SK-MEL-5 (cell line): ENCODE measurements at regions of chr20 and their contacts with region 1.

Region 1: DNA sequence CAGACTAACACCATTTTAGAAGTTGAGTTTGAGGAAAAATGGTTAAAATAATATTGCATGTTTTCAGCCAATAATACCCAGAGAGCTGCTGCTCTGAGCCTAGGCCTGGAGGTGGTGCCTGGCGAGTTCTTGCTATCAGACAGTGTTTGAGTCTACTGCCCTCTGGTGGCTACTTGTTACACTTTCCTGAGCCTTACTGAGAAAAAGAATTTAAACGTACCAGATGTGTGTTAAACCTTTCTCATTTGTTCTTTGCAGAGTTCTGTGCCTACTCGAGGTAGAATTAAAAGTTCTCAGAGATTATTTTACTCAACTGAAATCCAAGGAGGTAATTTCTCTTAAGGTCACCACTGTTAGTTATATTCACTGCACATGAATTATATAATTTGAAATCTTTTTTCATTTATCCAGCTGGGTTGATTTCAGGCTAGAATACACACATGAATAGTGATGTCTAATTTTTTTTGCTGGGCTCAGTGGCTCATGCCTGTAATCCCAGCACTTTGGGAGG is 38.2 kb downstream of the SHLD1 start:
- DNase-seq: peak; percentile 93

Region 2: DNA sequence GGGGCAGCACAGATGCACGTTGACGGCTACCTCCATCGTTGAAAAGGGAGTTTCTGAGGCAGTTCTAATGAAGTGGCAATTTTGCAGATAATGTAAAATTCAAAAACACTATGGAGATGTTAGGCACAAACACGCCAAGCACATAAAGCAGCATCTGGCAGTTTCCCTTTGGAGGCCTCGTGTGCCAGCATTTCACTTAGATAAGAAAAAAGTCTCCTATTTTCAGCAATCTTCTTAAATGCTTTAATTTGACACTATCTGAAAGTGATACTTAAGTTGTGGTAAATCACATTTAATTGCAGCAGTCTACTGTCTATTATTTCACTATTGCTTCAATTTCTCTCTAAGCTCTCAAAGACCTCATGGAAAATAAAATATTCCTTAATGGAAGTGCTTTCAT is 346.3 kb before region 1 on chr20:
- in situ Hi-C with region 1: no loop called
- DNase-seq: no peak

Region 3: GRCh38 chr20:5557123-5557522 is 231.3 kb before region 1 on chr20:
- in situ Hi-C with region 1: loop called (anchors 25 kb)
- DNase-seq: peak; percentile 77